K562 (cell line): ENCODE measurements at regions of chr2 and their contacts with region 1.

Region 1: DNA sequence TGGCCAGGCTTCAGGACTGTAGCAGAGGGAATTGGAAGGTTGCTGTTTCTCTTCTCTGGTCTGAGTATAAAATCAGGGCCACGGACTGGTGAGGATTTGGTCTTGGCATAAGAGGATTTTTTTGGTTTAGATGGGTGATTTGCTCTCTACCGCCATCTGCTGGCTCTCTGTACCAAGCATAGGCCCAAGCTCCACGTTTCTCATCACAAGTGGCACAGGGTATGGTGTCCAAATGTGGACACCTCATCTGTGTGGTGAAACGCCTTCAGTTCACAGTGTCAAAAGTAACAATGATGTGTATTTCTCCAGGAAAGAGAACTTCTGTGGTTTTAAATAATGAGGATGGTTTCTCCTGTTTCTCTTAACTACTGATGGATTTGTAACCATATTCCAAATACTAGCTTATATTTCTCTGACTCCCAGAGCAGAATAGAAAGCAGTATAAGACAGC is 115.1 kb downstream of the EML6 start:
- DNase-seq: peak; percentile 57 to 67 (median 64)
- ATAC-seq: peak; percentile 93
- H3K4me3 ChIP-seq: no peak overlapping the region
- H3K27ac ChIP-seq: no peak overlapping the region
- H3K4me1 ChIP-seq: no peaks in the 10 kb centered on the region
- H3K27me3 ChIP-seq: peaks cover 21 to 43% of the 10 kb centered on the region in 2 experiments
- CTCF ChIP-seq: peak; percentile 63 to 81 (median 78)
- EP300 ChIP-seq: no peak
- POLR2A ChIP-seq: no peak
- RAD21 ChIP-seq: peak; percentile 65 to 77

Region 2: DNA sequence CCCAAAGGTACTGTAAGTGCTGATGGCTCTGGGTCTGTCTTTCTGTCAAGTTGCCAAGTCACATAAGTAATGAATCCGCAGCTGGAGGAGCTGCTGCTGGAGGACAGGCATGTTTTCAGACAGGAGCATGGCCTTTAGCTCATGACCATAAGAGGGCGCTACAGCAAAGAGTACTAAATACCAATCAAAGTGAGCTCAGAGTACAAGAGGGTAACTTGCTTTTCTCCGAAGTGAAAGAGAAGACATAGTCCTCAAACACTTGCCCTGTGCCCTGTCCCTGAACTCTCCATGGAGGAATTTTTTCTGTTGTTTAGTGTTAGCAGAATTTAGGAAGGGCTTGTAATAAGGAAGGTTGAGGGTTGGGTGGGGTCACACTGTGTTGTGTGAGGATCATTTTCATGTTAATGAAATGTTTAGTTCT is 173.2 kb before region 1 on chr2:
- CTCF ChIA-PET with region 1: no interaction called
- POLR2A ChIA-PET with region 1: no interaction called
- in situ Hi-C with region 1: no loop called
- intact Hi-C with region 1: loop called (anchors 1 kb)
- DNase-seq: peak; percentile 31 to 76 (median 41)
- ATAC-seq: peak; percentile 93
- H3K4me3 ChIP-seq: no peak overlapping the region
- H3K27ac ChIP-seq: no peak overlapping the region
- H3K4me1 ChIP-seq: peaks cover 0 to 2% of the 10 kb centered on the region in 2 experiments; a peak in 1 of 5 replicates
- H3K27me3 ChIP-seq: no peaks in the 10 kb centered on the region
- CTCF ChIP-seq: peak; percentile 61 to 75 (median 75); a peak in 5 of 6 replicates
- EP300 ChIP-seq: no peak
- POLR2A ChIP-seq: no peak
- RAD21 ChIP-seq: peak; percentile 41 to 62

Region 3: GRCh38 chr2:54763636-54764291 is 74.8 kb before region 1 on chr2:
- CTCF ChIA-PET with region 1: no interaction called
- POLR2A ChIA-PET with region 1: no interaction called
- in situ Hi-C with region 1: no loop called
- intact Hi-C with region 1: loop called (anchors 5 kb)
- DNase-seq: peak in 2 of 4 experiments; percentile 32 to 40
- ATAC-seq: peak; percentile 88
- H3K4me3 ChIP-seq: no peak overlapping the region
- H3K27ac ChIP-seq: no peak overlapping the region
- H3K4me1 ChIP-seq: no peaks in the 10 kb centered on the region
- H3K27me3 ChIP-seq: peaks cover 0 to 4% of the 10 kb centered on the region in 2 experiments; a peak in 1 of 5 replicates
- CTCF ChIP-seq: peak; percentile 38 to 72 (median 56)
- EP300 ChIP-seq: no peak
- POLR2A ChIP-seq: no peak
- RAD21 ChIP-seq: peak; percentile 62 to 75

Region 4: DNA sequence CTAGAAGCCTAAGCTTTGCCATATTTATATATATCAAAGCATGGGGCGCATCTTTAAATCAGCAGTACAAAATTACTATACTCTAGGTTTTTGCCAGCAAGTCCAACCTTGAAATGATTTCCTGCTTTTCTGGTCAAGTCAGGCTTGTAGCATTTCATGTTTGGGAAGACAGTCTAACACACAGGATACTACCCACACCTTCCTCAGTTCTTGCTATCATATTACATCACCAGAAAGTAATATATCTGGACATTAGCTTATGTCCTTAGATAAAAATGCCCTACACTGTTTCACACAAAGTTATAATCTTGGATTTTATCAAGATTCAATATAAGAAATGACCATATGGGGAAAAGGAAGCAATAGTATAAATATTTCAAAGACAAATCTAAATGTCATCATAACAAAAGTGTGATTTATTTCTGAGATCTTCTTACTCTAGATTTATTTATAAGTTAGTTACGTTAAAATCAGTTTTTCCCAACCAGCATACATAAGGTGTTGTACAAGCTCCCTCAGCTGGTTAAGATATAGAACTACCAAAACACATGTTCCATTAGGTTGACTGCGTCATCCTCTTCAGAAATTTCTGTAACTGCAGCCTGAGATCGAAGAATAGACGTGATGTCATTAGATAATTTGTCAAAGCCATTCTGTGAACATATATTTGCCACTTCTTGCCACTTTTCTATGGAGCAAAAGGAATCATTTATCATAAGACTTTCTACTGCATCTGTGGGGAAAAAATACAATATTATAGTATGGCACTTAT is 336.8 kb after region 1 on chr2:
- CTCF ChIA-PET with region 1: interaction called, 3 read pairs
- POLR2A ChIA-PET with region 1: no interaction called
- in situ Hi-C with region 1: no loop called
- intact Hi-C with region 1: loop called (anchors 5 kb)
- DNase-seq: peak; percentile 65 to 67 (median 66)
- ATAC-seq: peak; percentile 93
- H3K4me3 ChIP-seq: no peak overlapping the region
- H3K27ac ChIP-seq: no peak overlapping the region
- H3K4me1 ChIP-seq: no peaks in the 10 kb centered on the region; a peak in 1 of 5 replicates
- H3K27me3 ChIP-seq: no peaks in the 10 kb centered on the region
- CTCF ChIP-seq: peak; percentile 58 to 83 (median 59); a peak in 5 of 6 replicates
- EP300 ChIP-seq: 0 out of 2 replicates have a peak, but pooled peaks have one; percentile 19
- POLR2A ChIP-seq: no peak
- RAD21 ChIP-seq: peak; percentile 91 to 94